ENCODE measurements at regions of chr5 and their contacts with region 1.

Region 1: DNA sequence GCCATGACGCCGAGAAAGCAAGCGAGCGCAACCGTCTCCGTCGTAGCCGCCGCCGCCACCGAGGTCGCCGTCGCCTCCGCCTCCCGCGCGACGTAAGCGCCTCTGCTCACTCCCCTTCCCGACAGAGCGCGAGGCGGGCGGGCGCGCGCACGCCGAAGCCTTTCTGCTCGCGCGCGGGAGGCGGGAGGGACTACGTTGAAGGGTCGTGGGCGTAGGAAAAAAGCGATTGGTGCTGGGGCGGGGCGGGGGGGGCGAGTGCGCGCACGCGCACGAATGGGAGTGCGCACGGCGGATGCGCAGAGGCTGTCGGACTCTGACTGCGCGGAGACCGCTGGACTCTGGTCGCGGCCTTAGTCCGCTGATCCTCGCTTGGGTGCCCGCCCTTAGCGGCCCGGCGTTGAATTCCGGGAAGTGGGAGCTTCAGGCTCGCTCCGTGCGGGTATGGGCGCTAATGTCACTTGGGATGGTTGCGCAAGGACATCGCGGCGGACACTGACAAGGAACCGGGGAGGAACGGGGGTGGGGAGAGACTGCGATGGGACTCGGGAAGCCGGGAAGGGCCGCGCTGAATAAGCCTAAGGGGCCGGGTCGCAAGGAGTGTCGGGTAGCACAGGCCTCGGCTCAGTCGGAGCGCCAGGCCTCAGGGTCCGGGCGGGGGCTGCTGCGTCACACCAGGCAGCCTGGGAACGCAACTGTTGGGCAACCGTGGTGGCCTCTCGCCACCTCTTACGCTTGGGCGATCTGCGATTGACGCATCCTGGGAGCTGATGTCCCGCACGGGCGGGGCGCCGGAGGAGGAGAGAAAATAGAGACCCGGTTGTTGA is at the start of gene CHD1:
- DNase-seq: peak; percentile 99 to 100 (median 99)
- H3K4me3 ChIP-seq: peak within 1 kb of the TSS; percentile 94 to 99 (median 95)
- H3K4me3 Mint-ChIP-seq: peak within 1 kb of the TSS; percentile 98 to 99
- H3K27ac ChIP-seq: peak within 1 kb of the TSS; percentile 100
- H3K27ac Mint-ChIP-seq: peak within 1 kb of the TSS; percentile 100
- H3K4me1 ChIP-seq: peaks cover 49 to 64% of the 10 kb centered on the region in 2 donors
- H3K4me1 Mint-ChIP-seq: peaks cover 58% of the 10 kb centered on the region
- H3K27me3 ChIP-seq: no peaks in the 10 kb centered on the region
- H3K27me3 Mint-ChIP-seq: no peaks in the 10 kb centered on the region
- CTCF ChIP-seq: no peak
- polyA plus RNA-seq, gene CHD1: 3.1 to 45.7 (median 6.7) TPM

Region 2: GRCh38 chr5:98742396-98743073 is 186.6 kb before region 1 on chr5:
- intact Hi-C with region 1: no loop called
- DNase-seq: no peak
- H3K4me3 ChIP-seq: no peak overlapping the region
- H3K4me3 Mint-ChIP-seq: no peak overlapping the region
- H3K27ac ChIP-seq: no peak overlapping the region
- H3K27ac Mint-ChIP-seq: no peak overlapping the region
- H3K4me1 ChIP-seq: no peaks in the 10 kb centered on the region
- H3K4me1 Mint-ChIP-seq: no peaks in the 10 kb centered on the region
- H3K27me3 ChIP-seq: no peaks in the 10 kb centered on the region
- H3K27me3 Mint-ChIP-seq: peaks cover 0 to 11% (median 5%) of the 10 kb centered on the region in 3 donors
- CTCF ChIP-seq: no peak

Region 3: GRCh38 chr5:98796197-98796972 is 132.7 kb before region 1 on chr5:
- intact Hi-C with region 1: no loop called
- DNase-seq: peak in 2 of 3 donors; percentile 1 to 10
- H3K4me3 ChIP-seq: no peak overlapping the region
- H3K4me3 Mint-ChIP-seq: no peak overlapping the region
- H3K27ac ChIP-seq: no peak overlapping the region
- H3K27ac Mint-ChIP-seq: no peak overlapping the region
- H3K4me1 ChIP-seq: no peaks in the 10 kb centered on the region
- H3K4me1 Mint-ChIP-seq: no peaks in the 10 kb centered on the region
- H3K27me3 ChIP-seq: no peaks in the 10 kb centered on the region
- H3K27me3 Mint-ChIP-seq: peaks cover 3 to 17% (median 12%) of the 10 kb centered on the region in 3 donors
- CTCF ChIP-seq: peak; percentile 69

Region 4: DNA sequence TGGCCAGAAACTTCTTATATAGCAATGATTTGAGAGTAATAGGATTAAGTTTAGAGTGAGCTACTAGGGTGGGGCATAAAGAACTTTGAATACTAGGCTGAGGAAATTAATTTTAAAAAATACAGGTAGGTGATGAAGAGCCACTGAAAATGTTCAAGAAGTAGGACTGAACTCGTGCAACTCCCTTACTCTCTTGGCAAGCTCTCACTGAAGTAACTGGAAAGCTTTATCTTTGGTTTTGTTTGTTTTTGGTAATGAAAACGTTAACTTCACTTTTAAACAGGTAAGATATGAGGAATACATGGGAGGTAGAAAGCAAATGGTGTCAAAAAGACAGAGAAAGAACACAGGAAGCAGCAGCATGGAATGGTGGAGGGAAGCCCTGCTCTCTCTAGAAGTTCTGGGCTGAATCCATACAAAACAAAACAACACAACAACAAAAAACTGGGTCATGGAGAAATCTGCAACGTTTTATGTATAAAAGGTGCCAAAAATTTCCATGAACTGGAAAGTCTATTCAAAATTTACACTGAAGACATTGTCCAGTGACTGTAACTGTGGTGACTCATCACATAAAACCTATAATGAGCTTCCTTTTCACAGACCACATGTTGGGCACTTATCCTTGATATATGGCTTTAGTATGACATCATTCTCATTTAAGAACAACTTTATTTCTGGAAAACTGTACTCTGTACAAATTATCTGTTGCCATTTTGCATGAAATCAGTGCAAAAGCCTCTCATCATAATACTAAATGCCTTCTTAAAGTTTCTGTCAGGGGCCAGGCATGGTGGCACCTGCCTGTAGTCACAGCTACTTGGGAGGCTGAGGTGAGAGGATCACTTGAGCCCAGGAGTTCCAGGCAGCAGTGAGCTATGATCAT is 91.0 kb after region 1 on chr5:
- intact Hi-C with region 1: loop called in 1 of 2 experiments (anchors 5 kb)
- DNase-seq: peak; percentile 27 to 72 (median 55)
- H3K4me3 ChIP-seq: no peak overlapping the region
- H3K4me3 Mint-ChIP-seq: no peak overlapping the region
- H3K27ac ChIP-seq: no peak overlapping the region
- H3K27ac Mint-ChIP-seq: peak overlapping the region in 3 of 7 donors; percentile 26 to 64 (median 53)
- H3K4me1 ChIP-seq: peaks cover 43 to 49% of the 10 kb centered on the region in 2 donors
- H3K4me1 Mint-ChIP-seq: peaks cover 40% of the 10 kb centered on the region
- H3K27me3 ChIP-seq: no peaks in the 10 kb centered on the region
- H3K27me3 Mint-ChIP-seq: no peaks in the 10 kb centered on the region
- CTCF ChIP-seq: no peak